Dorsolateral prefrontal cortex (tissue), 120 donors: ENCODE measurements at regions of chr7 and their contacts with region 1.

Region 1: GRCh38 chr7:4631664-4632171 is 50.4 kb upstream of the FOXK1 start:
- DNase-seq: peak; percentile 44 to 86 (median 78)
- H3K4me3 ChIP-seq: peak overlapping the region in 56 of 59 donors; percentile 14 to 62 (median 42)
- H3K27ac ChIP-seq: peak overlapping the region in 41 of 59 donors; percentile 1 to 76 (median 55)
- H3K27me3 ChIP-seq: no peaks in the 10 kb centered on the region
- CTCF ChIP-seq: peak; percentile 52 to 92 (median 82)

Region 2: DNA sequence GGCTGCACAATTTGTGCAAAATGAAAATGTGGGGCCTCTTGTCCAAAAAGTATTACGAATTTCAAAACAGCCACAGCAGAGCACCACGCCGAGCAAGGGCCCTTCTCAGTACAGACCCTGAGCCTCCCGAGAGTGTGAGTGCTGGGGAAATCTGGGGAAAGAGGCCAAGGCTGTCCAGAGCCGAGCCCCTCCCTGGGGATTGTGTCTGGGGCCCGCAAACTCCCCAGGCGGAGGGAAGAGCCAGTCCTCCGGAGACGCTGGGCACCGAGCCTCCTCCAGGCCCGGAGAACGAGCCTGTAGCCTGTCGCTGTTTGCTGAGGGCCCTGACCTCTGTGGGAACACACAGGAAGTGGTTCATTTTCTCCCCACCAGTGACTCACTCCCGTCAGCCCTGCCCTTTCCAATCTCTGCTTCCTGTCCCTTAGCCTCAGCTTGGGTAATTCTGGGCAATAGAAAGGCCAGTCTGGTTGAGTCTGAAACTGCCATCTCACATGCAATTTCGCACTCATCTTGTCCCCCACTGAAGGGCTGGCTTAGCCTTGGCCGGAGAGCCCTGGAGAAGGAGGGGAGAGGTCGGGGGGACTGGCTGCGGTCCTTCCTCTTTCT is 1768.2 kb before region 1 on chr7:
- intact Hi-C with region 1: loop called in 1 of 2 experiments (anchors 10 kb)
- DNase-seq: peak in 1 of 10 donors; percentile 34
- H3K4me3 ChIP-seq: peak overlapping the region in 3 of 59 donors; percentile 1 to 15 (median 15)
- H3K27ac ChIP-seq: peak overlapping the region in 54 of 59 donors; percentile 6 to 87 (median 62)
- H3K27me3 ChIP-seq: no peaks in the 10 kb centered on the region
- CTCF ChIP-seq: no peak

Region 3: GRCh38 chr7:3300651-3301378 is 1330.9 kb before region 1 on chr7 and contains the start of gene SDK1:
- intact Hi-C with region 1: loop called in 1 of 2 experiments (anchors 10 kb)
- DNase-seq: peak; percentile 68 to 92 (median 82)
- H3K4me3 ChIP-seq: peak within 1 kb of the TSS; percentile 42 to 78 (median 63)
- H3K27ac ChIP-seq: peak within 1 kb of the TSS in 13 of 59 donors; percentile 5 to 82 (median 45)
- H3K27me3 ChIP-seq: no peaks in the 10 kb centered on the region
- CTCF ChIP-seq: peak; percentile 55 to 99 (median 89)
- total RNA-seq, gene SDK1: 2.4 to 16.4 (median 8.6) TPM

Region 4: GRCh38 chr7:3482147-3482964 is 1149.4 kb before region 1 on chr7:
- intact Hi-C with region 1: loop called in 1 of 2 experiments (anchors 5 kb)
- DNase-seq: peak in 1 of 10 donors; percentile 12
- H3K4me3 ChIP-seq: no peak overlapping the region
- H3K27ac ChIP-seq: no peak overlapping the region
- H3K27me3 ChIP-seq: no peaks in the 10 kb centered on the region
- CTCF ChIP-seq: peak in 46 of 56 donors; percentile 18 to 57 (median 38)

Region 5: DNA sequence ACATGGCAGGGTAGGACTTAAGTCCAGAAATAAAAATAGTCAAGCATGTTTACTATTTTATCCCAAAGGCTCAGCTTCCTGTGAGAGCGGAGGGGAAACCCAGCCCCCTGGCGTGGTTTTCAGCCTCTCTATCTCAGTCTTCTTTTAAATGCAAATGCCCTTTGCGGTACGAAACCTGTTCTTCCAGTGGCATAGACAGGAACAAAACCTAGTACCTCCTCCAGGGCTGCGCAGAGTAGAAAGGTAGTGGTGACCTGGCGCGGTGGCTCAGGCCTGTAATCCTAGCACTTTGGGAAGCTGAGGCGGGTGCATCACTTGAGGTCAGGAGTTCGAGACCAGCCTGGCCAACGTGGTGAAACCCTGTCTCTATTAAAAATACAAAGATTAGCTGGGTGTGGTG is 130.9 kb before region 1 on chr7:
- intact Hi-C with region 1: no loop called
- DNase-seq: no peak
- H3K4me3 ChIP-seq: no peak overlapping the region
- H3K27ac ChIP-seq: no peak overlapping the region
- H3K27me3 ChIP-seq: peaks cover 0 to 2% (median 0%) of the 10 kb centered on the region in 45 donors
- CTCF ChIP-seq: no peak